Activated naive CD4-positive, alpha-beta T cell treated with anti-CD3 and anti-CD28 coated beads for 36 hours (primary cell): ENCODE measurements at regions of chr17 and their contacts with region 1.

Region 1: DNA sequence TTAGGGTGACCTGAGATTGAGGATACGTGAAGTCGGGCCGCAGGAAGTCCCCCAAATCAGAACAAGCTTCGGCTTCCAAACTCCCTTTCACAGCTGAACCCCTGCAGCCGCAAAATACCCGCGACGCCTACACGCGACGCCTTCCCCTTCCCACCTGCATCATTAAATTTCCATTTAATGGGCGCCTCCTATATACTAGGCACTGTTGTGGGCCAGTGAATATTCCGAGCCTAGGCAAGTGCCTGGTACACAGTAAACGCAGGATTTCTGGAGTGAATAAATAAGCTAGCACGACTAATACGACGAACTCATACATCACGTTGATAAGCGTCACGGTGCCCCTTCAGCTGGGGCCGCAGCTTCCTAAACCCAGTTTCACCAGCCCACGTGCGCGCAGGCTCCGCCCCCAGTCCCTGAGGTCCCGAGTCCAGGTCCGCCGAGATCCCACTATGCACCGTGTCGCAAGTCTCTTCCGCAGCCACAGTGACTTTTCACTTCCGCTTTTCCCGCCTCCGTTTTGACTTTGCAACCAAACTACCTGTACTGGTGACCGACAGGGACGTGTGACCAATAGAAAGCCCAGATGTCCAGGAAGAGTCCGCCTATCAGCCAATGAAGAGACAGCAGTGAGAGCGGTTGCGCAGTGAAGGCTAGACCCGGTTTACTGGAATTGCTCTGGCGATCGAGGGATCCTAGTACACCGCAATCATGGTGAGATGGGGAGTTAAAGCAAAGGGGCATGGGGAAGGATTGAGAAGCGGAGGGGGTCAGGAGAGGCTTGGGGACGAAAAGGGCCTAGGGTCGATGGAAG is at the start of gene PSMB3:
- DNase-seq: peak; percentile 99
- H3K4me3 Mint-ChIP-seq: peak within 1 kb of the TSS; percentile 91
- H3K27ac Mint-ChIP-seq: peak within 1 kb of the TSS; percentile 95
- H3K4me1 Mint-ChIP-seq: peaks cover 48% of the 10 kb centered on the region
- H3K27me3 Mint-ChIP-seq: peaks cover 26% of the 10 kb centered on the region
- total RNA-seq, gene PSMB3: 368 to 369 TPM

Region 2: DNA sequence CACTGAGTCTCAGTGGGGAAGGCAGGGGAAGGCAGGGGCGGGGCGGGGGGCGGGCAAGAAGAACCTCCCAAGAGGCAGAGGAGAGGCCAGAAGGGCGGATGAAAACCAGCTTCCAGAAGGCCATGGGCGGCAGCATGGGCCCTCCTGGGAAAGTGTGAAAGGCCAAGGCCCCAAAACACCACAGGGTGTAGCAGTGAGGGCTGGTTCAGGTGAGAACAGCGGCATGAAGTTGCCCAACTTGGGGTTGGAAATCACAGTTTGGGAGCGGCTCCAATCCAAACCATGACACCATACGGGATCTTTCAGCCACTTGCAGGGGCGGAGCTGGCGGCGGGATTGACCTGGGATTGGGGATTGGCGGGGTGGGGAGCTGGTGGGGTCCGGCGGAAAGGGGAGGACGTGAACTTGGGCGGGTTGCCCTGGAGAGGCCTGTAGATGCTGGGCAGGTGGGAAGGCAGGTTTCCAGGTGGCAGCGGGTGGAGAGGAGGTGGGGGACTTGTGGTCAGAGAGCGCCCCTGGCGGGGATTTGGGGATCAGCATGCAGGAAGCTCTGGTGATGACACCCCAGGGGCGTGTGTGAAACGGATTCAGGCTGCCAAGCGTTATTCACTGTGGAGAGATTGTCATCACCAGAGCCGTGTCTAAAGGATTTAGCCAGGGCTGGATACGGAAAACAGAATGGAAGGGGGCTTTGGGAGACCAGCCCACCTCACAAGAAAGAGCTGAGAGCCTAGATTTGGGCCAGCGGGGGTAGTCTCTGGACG is 243.1 kb before region 1 on chr17:
- CTCF ChIA-PET with region 1: no interaction called
- intact Hi-C with region 1: loop called (anchors 5 kb)
- DNase-seq: peak; percentile 87
- H3K4me3 Mint-ChIP-seq: peak overlapping the region; percentile 78
- H3K27ac Mint-ChIP-seq: peak overlapping the region; percentile 56
- H3K4me1 Mint-ChIP-seq: peaks cover 10% of the 10 kb centered on the region
- H3K27me3 Mint-ChIP-seq: peaks cover 34% of the 10 kb centered on the region

Region 3: DNA sequence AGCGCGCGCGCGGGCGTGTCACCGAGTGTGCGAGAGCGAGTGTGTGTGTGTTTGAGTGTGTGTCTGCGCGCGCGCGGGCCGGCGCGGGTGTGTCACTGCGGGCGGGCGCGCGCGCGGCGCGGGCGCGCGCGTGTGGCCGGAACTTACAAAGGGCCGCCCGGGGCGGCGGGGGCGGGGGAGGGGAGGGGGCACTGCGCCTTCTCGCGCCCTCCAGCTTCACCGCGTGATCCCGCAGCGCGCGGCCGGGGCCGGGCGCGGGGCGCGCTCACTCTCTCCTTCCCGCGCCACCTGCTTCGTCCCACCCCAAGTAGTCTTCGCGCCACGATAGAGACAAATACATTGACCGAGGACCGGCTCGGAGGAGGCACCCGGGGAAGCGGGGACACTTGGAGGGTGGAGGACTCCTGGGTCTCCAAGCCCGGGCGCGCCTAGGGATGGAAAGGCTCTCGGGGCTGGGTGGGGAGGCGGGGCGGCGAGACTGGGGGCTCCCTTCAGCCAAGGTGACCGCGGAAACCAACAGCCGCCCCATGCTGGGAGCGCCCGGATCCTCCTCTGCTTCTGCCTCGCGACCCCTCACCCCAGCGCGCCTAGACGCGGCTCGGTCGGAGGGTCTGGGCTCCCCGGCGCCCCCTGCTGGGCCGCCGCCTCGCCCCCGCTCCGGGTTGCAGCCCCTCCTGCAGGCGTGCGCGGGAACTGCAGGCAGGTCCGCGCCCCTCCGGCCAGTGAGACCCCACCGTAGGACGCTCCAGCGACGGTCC is 146.3 kb before region 1 on chr17 and contains the start of gene SRCIN1:
- CTCF ChIA-PET with region 1: no interaction called
- intact Hi-C with region 1: loop called (anchors 5 kb)
- DNase-seq: peak; percentile 52
- H3K4me3 Mint-ChIP-seq: peak within 1 kb of the TSS; percentile 58
- H3K27ac Mint-ChIP-seq: no peak within 1 kb of the TSS
- H3K4me1 Mint-ChIP-seq: peaks cover 13% of the 10 kb centered on the region
- H3K27me3 Mint-ChIP-seq: peaks cover 65% of the 10 kb centered on the region
- total RNA-seq, gene SRCIN1: 0.67 to 0.94 TPM

Region 4: DNA sequence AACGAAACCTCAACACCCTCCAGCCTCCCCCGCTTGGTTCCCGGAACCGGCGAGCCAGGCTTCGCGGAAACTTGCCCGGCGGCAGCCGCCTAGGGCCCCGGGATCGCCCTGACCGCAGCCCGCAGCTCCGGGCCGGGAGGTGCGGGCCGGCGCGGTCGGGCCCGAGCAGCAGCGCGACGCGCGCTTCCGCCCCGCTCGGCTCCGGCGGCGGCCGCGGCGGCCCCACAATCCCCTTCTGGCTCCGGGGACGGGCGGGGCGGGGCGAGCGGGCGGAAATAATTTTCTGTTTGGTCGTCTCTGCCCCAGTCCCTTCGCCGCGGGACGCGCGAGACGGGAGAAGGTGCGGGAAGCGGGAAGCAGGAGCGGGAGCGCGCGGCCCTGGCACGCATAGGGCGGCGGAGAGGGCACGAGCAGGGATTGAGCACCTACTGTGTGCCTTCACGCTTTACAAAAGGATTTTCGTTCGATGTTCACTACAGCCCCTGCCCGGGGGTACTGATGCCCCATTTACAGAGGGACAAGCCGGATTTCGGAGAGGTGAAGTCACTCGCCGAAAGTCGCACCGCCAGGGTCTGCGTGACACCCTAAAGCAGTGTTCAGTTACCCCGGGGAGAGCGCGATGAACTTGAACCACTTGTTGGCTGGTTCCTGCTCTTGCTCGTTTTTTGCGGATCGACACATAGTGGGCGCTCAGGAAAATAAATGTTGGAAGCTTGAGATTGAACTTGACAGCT is 50.0 kb before region 1 on chr17:
- CTCF ChIA-PET with region 1: interaction called, 3 read pairs
- intact Hi-C with region 1: loop called (anchors 1 kb)
- DNase-seq: peak; percentile 92
- H3K4me3 Mint-ChIP-seq: peak overlapping the region; percentile 100
- H3K27ac Mint-ChIP-seq: peak overlapping the region; percentile 100
- H3K4me1 Mint-ChIP-seq: peaks cover 45% of the 10 kb centered on the region
- H3K27me3 Mint-ChIP-seq: no peaks in the 10 kb centered on the region

Region 5: GRCh38 chr17:38777641-38778250 is 25.4 kb after region 1 on chr17:
- CTCF ChIA-PET with region 1: no interaction called
- intact Hi-C with region 1: no loop called
- DNase-seq: no peak
- H3K4me3 Mint-ChIP-seq: no peak overlapping the region
- H3K27ac Mint-ChIP-seq: no peak overlapping the region
- H3K4me1 Mint-ChIP-seq: no peaks in the 10 kb centered on the region
- H3K27me3 Mint-ChIP-seq: no peaks in the 10 kb centered on the region

Region 6: DNA sequence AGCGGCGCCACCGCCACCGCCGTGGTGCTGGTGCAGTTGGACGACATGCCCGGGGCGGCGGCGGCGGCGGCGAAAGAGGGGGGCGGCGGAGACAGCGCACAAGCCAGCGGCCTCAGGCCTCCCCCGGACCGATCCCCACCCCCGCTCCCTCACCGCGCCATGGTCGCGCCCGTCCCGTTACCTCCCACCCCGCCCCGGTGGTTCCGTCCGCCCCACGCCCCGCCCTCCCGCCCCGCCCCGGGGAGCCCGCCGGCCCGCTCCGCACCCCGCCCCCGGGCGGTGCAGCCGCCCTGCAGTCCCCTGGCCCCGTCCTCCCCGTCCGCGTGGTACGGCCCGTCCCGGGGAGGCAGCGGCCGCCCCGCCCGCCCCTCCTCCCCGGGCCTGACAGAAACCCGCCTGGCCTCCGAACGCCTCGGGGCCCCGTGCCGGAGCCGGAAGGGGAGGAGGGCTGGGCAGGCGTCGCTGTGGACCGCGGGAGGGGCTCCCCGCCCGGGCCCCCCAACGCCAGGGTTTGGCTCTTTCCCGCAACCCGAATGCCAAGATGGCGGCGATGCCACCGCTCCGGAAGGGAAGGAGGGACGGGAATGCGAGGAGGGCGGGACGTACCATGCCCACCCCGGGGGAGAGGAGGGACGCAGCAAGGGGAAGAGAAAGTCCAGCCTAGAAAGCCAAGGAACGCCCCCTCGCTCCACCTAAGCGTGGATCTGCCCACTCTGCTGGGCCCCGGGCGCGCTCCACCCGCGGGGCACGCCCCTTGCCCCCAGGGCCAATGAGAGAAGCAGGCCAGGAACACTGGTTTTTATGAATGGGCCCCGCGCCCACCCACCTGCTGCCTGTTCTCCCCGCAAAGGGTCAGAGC is 47.3 kb after region 1 on chr17 and contains the start of gene PIP4K2B:
- CTCF ChIA-PET with region 1: no interaction called
- intact Hi-C with region 1: loop called (anchors 1 kb)
- DNase-seq: peak; percentile 91
- H3K4me3 Mint-ChIP-seq: peak within 1 kb of the TSS; percentile 95
- H3K27ac Mint-ChIP-seq: peak within 1 kb of the TSS; percentile 89
- H3K4me1 Mint-ChIP-seq: peaks cover 34% of the 10 kb centered on the region
- H3K27me3 Mint-ChIP-seq: no peaks in the 10 kb centered on the region
- total RNA-seq, gene PIP4K2B: 30.1 to 33.4 TPM

Region 7: GRCh38 chr17:38967290-38967738 is 215.0 kb after region 1 on chr17 and contains the start of gene FBXO47:
- CTCF ChIA-PET with region 1: no interaction called
- intact Hi-C with region 1: loop called (anchors 5 kb)
- DNase-seq: peak; percentile 93
- H3K4me3 Mint-ChIP-seq: peak within 1 kb of the TSS; percentile 75
- H3K27ac Mint-ChIP-seq: peak within 1 kb of the TSS; percentile 87
- H3K4me1 Mint-ChIP-seq: peaks cover 12% of the 10 kb centered on the region
- H3K27me3 Mint-ChIP-seq: no peaks in the 10 kb centered on the region
- total RNA-seq, gene FBXO47: 0.14 to 0.15 TPM